IMR-90 (cell line): ENCODE measurements at regions of chr2 and their contacts with region 1.

Region 1: DNA sequence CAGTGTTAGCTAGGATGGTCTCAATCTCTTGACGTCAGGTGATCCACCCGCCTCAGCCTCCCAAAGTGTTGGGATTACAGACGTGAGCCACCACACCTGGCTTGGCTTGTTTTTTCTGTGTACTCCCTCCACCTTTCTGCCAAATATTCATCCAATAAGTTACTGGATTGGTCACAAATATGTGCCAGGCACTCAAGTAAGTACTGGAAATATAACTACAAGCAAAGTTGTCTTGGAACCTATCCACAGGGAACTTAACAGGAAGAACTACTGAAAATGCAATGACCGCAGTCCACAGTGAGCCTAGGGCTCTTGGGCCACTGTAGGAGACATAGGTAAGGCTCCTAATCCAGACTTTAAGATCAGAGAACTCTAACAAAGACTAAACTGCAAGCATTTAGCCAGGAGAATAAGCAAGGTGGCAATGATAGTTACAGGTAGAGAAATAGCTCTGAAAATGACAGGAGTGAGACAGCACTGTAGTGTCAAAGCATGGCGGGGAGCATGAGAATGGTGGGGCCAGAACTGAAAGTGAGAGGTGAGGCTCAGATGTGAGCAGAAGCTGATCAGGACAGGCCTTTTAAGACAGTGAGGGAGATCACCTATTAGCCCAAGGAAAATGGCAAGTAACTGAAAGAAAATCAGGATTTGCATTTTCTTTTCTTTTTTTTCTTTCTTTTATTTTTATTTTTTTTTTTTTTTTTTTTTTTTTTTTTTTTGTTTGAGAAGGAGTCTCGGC is 252.1 kb downstream of the RBM43 start:
- DNase-seq: no peak
- ATAC-seq: no peak
- H3K4me3 ChIP-seq: no peak overlapping the region
- H3K27ac ChIP-seq: no peak overlapping the region
- H3K4me1 ChIP-seq: no peaks in the 10 kb centered on the region
- H3K27me3 ChIP-seq: no peaks in the 10 kb centered on the region
- CTCF ChIP-seq: no peak
- POLR2A ChIP-seq: no peak
- RAD21 ChIP-seq: no peak

Region 2: GRCh38 chr2:150978053-150978452 is 31.6 kb before region 1 on chr2:
- CTCF ChIA-PET with region 1: no interaction called
- POLR2A ChIA-PET with region 1: no interaction called
- dilution Hi-C with region 1: no loop called
- in situ Hi-C with region 1: no loop called
- intact Hi-C with region 1: loop called (anchors 5 kb)
- DNase-seq: no peak
- ATAC-seq: peak; percentile 48
- H3K4me3 ChIP-seq: no peak overlapping the region
- H3K27ac ChIP-seq: no peak overlapping the region
- H3K4me1 ChIP-seq: peaks cover 2% of the 10 kb centered on the region; the same call in 1 of the 2 replicates
- H3K27me3 ChIP-seq: no peaks in the 10 kb centered on the region
- CTCF ChIP-seq: no peak
- POLR2A ChIP-seq: no peak
- RAD21 ChIP-seq: no peak

Region 3: DNA sequence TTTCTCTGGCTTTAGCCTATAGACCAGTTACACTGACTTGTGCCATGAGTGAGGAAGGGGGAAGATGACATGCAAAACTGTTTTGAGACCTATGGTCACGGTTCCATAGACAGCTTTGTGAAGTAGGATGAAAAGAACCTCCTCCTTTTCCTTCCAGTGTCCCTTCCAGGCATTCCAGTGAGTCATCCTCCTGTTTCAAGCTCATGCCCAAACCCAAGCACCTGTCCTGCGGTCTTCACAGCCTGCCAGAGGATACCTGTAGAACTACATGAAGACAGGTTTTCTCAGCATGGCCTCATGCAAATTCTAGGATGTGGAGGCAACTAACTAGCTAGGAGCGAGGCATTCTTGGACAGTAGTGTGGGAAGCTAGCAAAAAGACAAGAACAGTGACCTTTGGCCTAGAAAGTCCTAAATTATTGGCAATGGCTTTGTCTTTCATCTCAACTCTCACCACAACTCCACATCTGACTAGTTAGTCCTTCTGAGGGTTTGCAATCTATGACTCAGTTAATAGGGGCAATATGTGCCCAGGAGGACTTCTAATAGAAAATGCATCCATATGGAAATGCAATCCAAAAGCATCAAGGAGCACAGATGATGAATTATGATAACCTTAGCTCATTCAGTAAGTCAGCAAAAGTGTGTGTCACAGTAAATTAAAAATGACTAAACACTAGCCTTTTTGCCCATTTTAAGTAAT is 97.3 kb after region 1 on chr2:
- CTCF ChIA-PET with region 1: no interaction called
- POLR2A ChIA-PET with region 1: no interaction called
- dilution Hi-C with region 1: no loop called
- in situ Hi-C with region 1: no loop called
- intact Hi-C with region 1: no loop called
- DNase-seq: no peak
- ATAC-seq: no peak
- H3K4me3 ChIP-seq: no peak overlapping the region
- H3K27ac ChIP-seq: no peak overlapping the region
- H3K4me1 ChIP-seq: no peaks in the 10 kb centered on the region
- H3K27me3 ChIP-seq: no peaks in the 10 kb centered on the region
- CTCF ChIP-seq: no peak
- POLR2A ChIP-seq: no peak
- RAD21 ChIP-seq: no peak